ENCODE measurements at regions of chr7 and their contacts with region 1.

Region 1: DNA sequence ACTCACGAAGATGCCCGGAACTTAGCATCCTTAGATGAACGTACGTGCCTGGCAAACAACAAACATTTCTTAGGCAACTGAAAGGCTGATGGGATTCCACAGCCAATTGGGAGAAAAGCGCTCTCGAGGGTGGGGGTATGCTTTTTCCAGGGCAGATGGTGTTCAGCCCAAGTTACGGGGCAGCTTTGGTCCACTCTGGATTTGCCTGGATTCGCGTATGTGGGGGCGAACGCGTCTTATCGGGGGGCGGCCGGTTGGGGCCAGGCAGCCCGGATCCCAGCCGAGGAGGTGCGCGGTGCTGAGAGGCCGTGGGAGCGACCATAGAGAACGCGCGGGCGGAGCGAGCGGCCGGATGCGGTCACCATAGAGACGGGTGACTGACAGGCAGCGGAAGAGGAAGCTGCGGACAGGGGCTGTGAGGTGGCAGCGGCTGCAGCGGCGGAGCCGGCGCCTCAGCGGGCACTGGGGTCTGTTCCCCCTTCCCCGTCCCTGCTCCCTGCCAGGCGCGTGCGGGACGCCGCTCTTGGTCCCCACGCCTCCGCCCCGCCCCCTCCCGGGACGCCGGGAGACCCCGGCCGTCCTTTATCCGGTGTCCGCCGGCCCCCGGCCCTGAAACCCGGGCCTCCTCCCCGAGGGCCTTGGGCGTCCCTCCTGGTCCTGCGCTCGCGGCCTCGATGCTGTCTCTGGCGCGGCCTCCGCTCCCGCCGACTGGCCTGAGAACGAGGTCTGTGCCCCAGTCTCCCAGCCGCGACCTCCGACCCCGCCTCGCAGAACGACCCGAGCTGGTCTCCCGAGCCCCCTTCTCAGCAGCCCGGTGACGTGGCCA is at the start of gene CHPF2:
- DNase-seq: peak; percentile 93 to 96 (median 96)
- ATAC-seq: peak; percentile 89 to 95 (median 94)
- H3K4me3 ChIP-seq: peak within 1 kb of the TSS; percentile 85 to 98 (median 96)
- H3K27ac ChIP-seq: peak within 1 kb of the TSS; percentile 59 to 90 (median 86)
- H3K4me1 ChIP-seq: peaks cover 0 to 42% (median 26%) of the 10 kb centered on the region in 12 donors
- H3K27me3 ChIP-seq: no peaks in the 10 kb centered on the region
- CTCF ChIP-seq: no peak
- POLR2A ChIP-seq: peak; percentile 70 to 90
- total RNA-seq, gene CHPF2: 16.6 to 31.9 (median 18.3) TPM

Region 2: DNA sequence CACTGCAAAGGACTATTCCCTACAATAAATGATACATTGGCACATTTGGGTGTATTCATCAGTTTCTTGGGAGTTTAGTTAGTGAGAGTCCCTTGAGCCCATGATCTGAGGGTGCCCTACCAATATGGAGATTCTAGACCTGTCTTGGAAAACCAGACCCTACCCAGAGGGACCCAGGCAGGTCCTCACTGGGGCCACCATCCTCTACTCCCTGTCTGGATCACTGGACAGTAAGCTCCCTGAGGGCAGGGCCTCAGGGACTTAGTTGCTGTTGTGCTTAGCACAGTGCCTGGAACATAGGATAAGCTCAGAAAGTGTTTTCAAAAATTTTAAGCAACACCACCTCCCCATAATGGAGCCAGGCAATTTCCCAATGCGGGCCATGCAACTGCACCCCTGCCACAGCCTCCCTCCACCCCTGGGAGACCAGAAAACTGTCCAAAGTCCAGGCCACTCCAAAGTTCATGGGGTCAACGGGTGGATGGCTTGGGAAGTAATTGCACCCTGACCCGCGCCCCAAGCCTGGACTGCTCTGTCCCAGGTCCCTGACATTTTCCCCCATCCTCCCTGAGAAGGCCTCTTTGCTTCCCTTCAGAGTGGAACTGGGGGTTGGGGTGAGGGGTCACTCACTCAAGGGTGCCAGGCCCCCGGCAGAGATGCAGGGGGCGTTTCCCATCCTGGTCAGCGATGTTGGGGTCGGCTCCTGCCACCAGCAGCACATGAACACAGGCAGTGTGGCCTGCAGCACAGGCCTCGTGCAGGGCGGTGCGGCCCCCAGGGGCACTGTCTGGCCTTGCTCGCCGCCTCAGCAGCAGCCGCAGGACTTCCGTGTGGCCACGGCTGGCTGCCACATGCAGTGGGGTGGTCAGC is 46.3 kb before region 1 on chr7:
- intact Hi-C with region 1: loop called in 1 of 10 experiments (anchors 2 kb)
- DNase-seq: peak in 2 of 5 donors; percentile 32 to 52
- ATAC-seq: peak in 3 of 4 donors; percentile 29 to 53 (median 50)
- H3K4me3 ChIP-seq: peak overlapping the region; percentile 23 to 52 (median 40)
- H3K27ac ChIP-seq: peak overlapping the region; percentile 28 to 96 (median 88)
- H3K4me1 ChIP-seq: peaks cover 0 to 22% (median 0%) of the 10 kb centered on the region in 12 donors
- H3K27me3 ChIP-seq: peaks cover 0 to 3% (median 0%) of the 10 kb centered on the region in 9 donors
- CTCF ChIP-seq: no peak
- POLR2A ChIP-seq: no peak

Region 3: DNA sequence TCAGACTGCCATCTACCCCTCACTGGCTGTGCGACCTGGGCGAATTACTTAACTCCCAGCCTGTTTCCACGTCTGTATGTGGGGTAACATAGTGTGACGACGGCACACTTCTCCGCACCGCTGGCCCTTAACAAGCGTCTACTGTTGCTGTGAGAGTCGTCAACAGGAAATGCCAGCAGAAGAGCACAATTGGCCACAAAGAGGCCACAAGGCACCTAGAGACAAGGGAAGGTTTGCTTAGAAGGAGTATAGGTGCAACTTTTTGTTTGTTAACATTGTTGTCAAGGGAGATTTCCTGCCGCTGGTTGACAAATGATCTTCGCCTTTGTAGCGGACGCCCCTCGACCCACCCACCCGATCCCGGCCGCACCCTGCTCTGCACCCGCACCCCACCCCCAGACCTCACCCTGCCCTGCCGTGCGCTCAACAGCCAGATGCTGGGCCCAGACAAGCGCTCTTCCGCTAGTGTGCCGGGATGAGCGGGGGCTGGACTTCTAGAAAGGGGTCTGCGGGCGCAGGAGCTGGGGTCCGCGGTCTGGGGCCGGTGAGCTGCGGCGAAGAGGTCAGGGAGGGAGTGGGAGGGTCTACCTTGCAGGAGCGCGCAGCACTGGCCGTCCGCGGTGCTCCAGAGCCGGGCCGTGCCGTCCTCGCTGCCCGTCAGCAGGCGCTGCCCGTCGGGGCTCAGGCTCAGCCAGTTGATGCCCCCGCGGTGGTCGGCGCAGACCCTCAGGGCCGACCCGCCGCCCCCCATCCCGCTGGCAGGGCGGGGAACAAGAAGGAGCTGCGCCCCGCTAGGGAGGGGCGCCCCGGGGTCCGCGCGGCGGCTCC is 176.7 kb after region 1 on chr7:
- intact Hi-C with region 1: no loop called
- DNase-seq: peak in 1 of 5 donors; percentile 62
- ATAC-seq: peak in 2 of 4 donors; percentile 6 to 17
- H3K4me3 ChIP-seq: peak overlapping the region; percentile 28 to 53 (median 48)
- H3K27ac ChIP-seq: peak overlapping the region in 3 of 12 donors; percentile 24 to 63 (median 46)
- H3K4me1 ChIP-seq: peaks cover 0 to 32% (median 14%) of the 10 kb centered on the region in 12 donors
- H3K27me3 ChIP-seq: peaks cover 18 to 57% (median 26%) of the 10 kb centered on the region in 9 donors
- CTCF ChIP-seq: no peak
- POLR2A ChIP-seq: no peak